Ovary (tissue), 10 donors: ENCODE measurements at regions of chr12 and their contacts with region 1.

Region 1: GRCh38 chr12:98424726-98425401 is 90.5 kb upstream of the TMPO start:
- DNase-seq: peak; percentile 56 to 74 (median 65)
- H3K4me3 ChIP-seq: no peak overlapping the region
- H3K27ac ChIP-seq: no peak overlapping the region
- H3K4me1 ChIP-seq: peaks cover 4% of the 10 kb centered on the region
- H3K27me3 ChIP-seq: no peaks in the 10 kb centered on the region
- CTCF ChIP-seq: peak; percentile 32 to 75 (median 68)
- EP300 ChIP-seq: no peak
- POLR2A ChIP-seq: no peak

Region 2: GRCh38 chr12:98516184-98516873 is 91.5 kb after region 1 on chr12:
- intact Hi-C with region 1: loop called in 3 of 4 experiments (anchors 5 to 10 kb)
- DNase-seq: peak; percentile 65 to 78 (median 69)
- H3K4me3 ChIP-seq: peak overlapping the region; percentile 100
- H3K27ac ChIP-seq: peak overlapping the region; percentile 91 to 96
- H3K4me1 ChIP-seq: peaks cover 10% of the 10 kb centered on the region
- H3K27me3 ChIP-seq: no peaks in the 10 kb centered on the region
- CTCF ChIP-seq: peak; percentile 47 to 68 (median 64)
- EP300 ChIP-seq: no peak
- POLR2A ChIP-seq: no peak

Region 3: DNA sequence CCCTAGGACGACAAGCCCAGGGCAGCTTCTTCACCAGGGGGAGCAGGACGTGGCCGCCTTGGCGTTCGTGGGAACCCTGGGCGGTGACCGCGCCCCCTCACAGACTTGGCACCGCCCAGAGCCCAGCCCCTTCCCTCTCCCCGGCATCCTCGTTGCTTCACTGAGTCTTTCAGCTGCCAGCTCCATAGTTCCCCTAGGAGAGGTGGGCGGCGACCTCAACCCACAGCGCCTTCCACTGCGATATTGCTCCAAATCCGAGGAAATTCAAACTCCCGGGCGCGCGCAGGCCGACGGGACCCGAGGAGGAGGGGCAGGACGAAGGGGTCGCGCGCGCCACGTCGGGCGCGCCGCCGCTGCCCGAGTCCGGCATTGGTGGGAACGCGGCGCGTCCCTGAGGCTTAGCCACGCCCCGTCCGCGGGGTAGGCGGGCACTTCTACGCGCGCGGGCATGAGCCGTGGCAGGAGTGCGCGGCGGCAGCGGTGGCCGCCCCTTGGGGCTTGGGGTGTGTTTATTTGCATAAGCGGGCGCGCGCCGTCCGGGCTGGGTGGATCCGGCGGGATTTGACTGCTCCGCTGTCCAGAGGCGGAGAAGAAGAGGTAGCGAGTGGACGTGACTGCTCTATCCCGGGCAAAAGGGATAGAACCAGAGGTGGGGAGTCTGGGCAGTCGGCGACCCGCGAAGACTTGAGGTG is 220.0 kb after region 1 on chr12 and contains the starts of genes APAF1 and IKBIP:
- intact Hi-C with region 1: loop called in 2 of 4 experiments (anchors 5 to 10 kb)
- DNase-seq: peak; percentile 95 to 99 (median 96)
- H3K4me3 ChIP-seq: peak within 1 kb of the TSS; percentile 82
- H3K27ac ChIP-seq: peak within 1 kb of the TSS; percentile 71 to 79
- H3K4me1 ChIP-seq: peaks cover 4% of the 10 kb centered on the region
- H3K27me3 ChIP-seq: no peaks in the 10 kb centered on the region
- CTCF ChIP-seq: peak in 1 of 3 donors; percentile 4
- EP300 ChIP-seq: no peak
- POLR2A ChIP-seq: peak; percentile 58
- total RNA-seq, gene APAF1: 9.4 to 17.1 (median 11.9) TPM
- total RNA-seq, gene IKBIP: 6.8 to 12.4 (median 9.5) TPM

Region 4: GRCh38 chr12:98653866-98654493 is 229.1 kb after region 1 on chr12:
- intact Hi-C with region 1: loop called in 2 of 4 experiments (anchors 5 to 10 kb)
- DNase-seq: no peak
- H3K4me3 ChIP-seq: no peak overlapping the region
- H3K27ac ChIP-seq: no peak overlapping the region
- H3K4me1 ChIP-seq: no peaks in the 10 kb centered on the region
- H3K27me3 ChIP-seq: no peaks in the 10 kb centered on the region
- CTCF ChIP-seq: peak in 2 of 3 donors; percentile 37 to 58
- EP300 ChIP-seq: no peak
- POLR2A ChIP-seq: no peak